SK-N-SH (cell line): ENCODE measurements at regions of chr10 and their contacts with region 1.

Region 1: DNA sequence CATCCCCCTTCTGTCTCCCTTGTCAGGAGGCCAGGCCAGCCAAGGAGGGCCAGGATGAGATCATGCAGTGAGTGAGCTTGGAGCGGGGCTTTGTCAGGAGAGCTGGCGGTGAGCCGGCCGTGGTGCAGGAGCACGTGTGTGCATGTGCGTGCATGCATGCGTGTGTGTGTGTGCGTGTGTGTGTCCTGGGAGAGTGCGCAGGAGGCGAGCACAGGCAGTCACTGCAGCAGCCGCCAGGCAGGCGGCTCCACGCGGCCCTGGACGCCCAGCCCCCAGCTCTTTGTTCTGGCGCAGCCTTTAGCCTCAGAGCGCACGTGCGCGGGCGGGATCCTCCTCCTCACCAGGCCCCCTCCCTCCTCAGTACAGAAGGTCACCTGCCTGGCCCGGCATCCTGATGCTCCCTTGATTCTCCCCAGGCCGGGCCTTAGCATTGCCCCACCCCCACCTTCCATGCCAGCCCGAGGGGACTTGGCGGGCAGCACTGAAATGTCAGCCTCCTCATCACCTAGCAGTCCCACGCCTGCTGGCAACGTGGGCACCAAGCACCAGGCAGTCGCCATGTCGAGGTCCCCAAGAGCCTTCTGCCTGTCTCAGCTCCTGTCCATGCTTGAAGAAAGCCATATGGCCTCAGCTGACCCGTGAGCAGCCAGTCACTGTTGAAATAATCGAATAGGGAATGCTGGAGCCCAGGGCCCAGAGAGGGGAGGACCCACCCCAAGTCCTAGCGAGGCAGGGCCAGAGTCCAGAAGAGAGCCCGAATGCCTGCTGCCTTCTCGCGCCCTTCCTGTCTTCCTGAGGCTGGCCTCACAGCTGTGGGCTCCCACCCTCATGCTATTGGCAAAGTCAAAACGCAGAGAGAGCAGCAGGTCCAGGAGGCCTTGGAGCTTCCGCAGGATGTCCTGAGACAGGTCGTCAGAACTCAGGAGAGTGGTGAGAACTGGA is 125.9 kb upstream of the PPIF start:
- DNase-seq: peak; percentile 84
- H3K4me3 ChIP-seq: no peak overlapping the region
- H3K27ac ChIP-seq: peak overlapping the region; percentile 72 to 93
- H3K4me1 ChIP-seq: peaks cover 33 to 79% of the 10 kb centered on the region in 2 experiments
- H3K27me3 ChIP-seq: no peaks in the 10 kb centered on the region
- CTCF ChIP-seq: no peak
- EP300 ChIP-seq: peak in 1 of 2 experiments; percentile 49; a peak in 2 of 4 replicates
- RAD21 ChIP-seq: peak; percentile 31

Region 2: DNA sequence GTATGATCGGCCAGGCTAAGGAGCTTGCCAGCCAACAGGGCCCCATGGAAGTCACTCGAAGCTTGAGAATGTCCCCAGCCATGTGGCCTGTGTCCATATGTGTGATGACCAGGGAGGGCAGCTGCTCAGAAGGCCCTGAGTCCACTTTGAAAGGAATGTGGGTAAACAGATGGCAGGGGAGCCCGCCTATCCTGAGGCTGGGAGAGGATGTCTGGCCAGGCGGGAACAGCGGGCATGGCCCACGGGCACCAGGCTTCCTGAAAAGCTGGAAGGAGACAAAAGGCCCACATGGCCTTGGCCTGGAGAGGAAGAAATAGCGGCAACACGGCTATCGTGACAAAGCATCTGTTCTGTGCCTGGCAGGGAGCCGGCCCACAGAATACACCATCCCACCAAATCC is 12.0 kb before region 1 on chr10:
- CTCF ChIA-PET with region 1: interaction called, 11 read pairs
- POLR2A ChIA-PET with region 1: interaction called, 69 read pairs
- DNase-seq: peak; percentile 74
- H3K4me3 ChIP-seq: no peak overlapping the region
- H3K27ac ChIP-seq: peak overlapping the region in 1 of 2 experiments; percentile 92; a peak in 2 of 4 replicates
- H3K4me1 ChIP-seq: peaks cover 0 to 61% of the 10 kb centered on the region in 2 experiments; a peak in 2 of 4 replicates
- H3K27me3 ChIP-seq: no peaks in the 10 kb centered on the region
- CTCF ChIP-seq: no peak
- EP300 ChIP-seq: no peak; a peak in 1 of 4 replicates
- RAD21 ChIP-seq: no peak

Region 3: DNA sequence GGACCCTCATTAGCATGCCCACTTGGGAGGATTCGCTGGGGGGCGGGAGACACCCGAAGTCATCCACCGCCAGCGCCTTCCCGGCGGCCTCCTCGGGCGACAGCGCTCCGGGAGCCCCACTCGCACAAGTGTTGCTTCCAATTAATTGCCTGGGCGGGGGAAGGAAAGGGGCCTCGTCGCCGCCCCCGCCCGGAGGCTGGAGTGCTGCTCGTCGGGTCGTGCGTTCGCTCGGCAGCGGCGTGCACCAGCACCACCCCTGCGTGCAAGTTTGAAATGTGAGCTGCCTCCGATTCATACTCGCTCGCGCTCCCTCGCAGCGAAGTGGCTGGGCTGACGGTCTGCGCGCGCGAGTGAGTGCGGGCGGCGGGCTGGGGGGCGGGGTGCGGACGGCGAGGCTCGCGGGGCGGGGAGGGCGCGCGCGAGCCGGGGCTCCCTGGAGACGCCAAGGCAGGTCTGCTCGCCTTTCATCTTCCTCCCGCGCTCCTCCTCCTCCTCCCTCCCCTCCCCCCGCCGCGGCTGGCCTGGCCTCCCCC is 21.3 kb after region 1 on chr10:
- CTCF ChIA-PET with region 1: interaction called, 8 read pairs
- POLR2A ChIA-PET with region 1: interaction called, 237 read pairs
- DNase-seq: peak; percentile 86
- H3K4me3 ChIP-seq: peak overlapping the region; percentile 53 to 59
- H3K27ac ChIP-seq: peak overlapping the region; percentile 41 to 99; a peak in 3 of 4 replicates
- H3K4me1 ChIP-seq: peaks cover 68 to 85% of the 10 kb centered on the region in 2 experiments
- H3K27me3 ChIP-seq: no peaks in the 10 kb centered on the region
- CTCF ChIP-seq: no peak
- EP300 ChIP-seq: no peak
- RAD21 ChIP-seq: peak; percentile 16; the same call in 1 of the 2 replicates

Region 4: GRCh38 chr10:79487296-79488194 is 266.2 kb after region 1 on chr10:
- CTCF ChIA-PET with region 1: no interaction called
- POLR2A ChIA-PET with region 1: no interaction called
- DNase-seq: peak; percentile 77
- H3K4me3 ChIP-seq: no peak overlapping the region; a peak in 1 of 4 replicates
- H3K27ac ChIP-seq: peak overlapping the region; percentile 89 to 91
- H3K4me1 ChIP-seq: peaks cover 27 to 34% of the 10 kb centered on the region in 2 experiments
- H3K27me3 ChIP-seq: no peaks in the 10 kb centered on the region
- CTCF ChIP-seq: peak; percentile 73
- EP300 ChIP-seq: no peak
- RAD21 ChIP-seq: peak; percentile 78